ENCODE measurements at regions of chr6 and their contacts with region 1.

Region 1: GRCh38 chr6:52407467-52407866 is 12.7 kb upstream of the EFHC1 start:
- DNase-seq: peak; percentile 80
- H3K4me3 ChIP-seq: no peak overlapping the region
- H3K27ac ChIP-seq: no peak overlapping the region
- H3K4me1 ChIP-seq: no peaks in the 10 kb centered on the region
- CTCF ChIP-seq: peak; percentile 92

Region 2: GRCh38 chr6:52162940-52163908 is 244.2 kb before region 1 on chr6:
- CTCF ChIA-PET with region 1: no interaction called
- POLR2A ChIA-PET with region 1: no interaction called
- intact Hi-C with region 1: loop called (anchors 2 kb)
- DNase-seq: peak; percentile 46
- H3K4me3 ChIP-seq: no peak overlapping the region
- H3K27ac ChIP-seq: no peak overlapping the region
- H3K4me1 ChIP-seq: no peaks in the 10 kb centered on the region
- CTCF ChIP-seq: peak; percentile 82

Region 3: DNA sequence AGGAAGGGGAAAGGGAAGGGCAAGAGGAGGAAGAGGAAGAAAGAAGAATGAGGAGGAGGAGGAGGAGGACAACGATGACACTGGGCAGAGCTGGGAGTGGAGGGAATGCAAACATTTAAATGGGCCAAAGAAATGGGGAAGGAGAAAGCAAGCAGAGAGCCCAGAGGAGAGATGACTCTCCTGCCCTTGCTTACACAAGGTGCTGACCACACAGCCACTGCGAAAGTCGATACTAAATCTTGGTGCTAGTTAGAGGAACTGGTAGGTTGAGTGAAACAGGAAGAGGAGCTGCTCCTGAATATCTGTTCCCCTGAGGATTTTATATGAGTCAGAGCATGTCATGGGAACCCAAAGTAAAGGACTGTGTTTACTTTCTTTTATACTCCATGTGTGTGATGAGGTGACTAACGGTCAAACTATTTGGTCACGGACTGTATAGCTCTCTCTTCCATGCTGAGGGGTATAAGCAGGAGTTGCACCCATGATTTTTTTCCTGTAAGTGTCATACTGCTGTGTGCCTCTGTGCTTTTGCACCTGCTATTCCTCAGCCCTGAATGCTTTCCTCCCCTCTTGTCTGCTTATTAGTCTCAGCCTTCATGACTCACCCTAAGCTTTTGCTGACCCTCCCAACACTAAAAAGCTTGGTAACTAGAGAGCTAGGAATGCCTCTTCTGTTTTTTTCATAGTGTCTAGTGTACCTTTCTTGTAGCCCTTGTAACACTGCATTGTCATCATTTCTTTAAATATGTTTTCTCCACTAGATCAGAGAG is 55.0 kb before region 1 on chr6:
- CTCF ChIA-PET with region 1: no interaction called
- POLR2A ChIA-PET with region 1: no interaction called
- intact Hi-C with region 1: no loop called
- DNase-seq: no peak
- H3K4me3 ChIP-seq: no peak overlapping the region
- H3K27ac ChIP-seq: no peak overlapping the region
- H3K4me1 ChIP-seq: peaks cover 36% of the 10 kb centered on the region
- CTCF ChIP-seq: no peak

Region 4: GRCh38 chr6:52670502-52671409 is 263.3 kb after region 1 on chr6 and contains the start of gene TMEM14A:
- CTCF ChIA-PET with region 1: interaction called, 3 read pairs
- POLR2A ChIA-PET with region 1: interaction called, 12 read pairs
- intact Hi-C with region 1: no loop called
- DNase-seq: peak; percentile 92
- H3K4me3 ChIP-seq: peak within 1 kb of the TSS; percentile 75
- H3K27ac ChIP-seq: peak within 1 kb of the TSS; percentile 13
- H3K4me1 ChIP-seq: peaks cover 50% of the 10 kb centered on the region
- CTCF ChIP-seq: no peak
- total RNA-seq, gene TMEM14A: 14.6 and 17.8 TPM in 2 replicates

Measured in OCI-LY7 (cell line).